ENCODE measurements at regions of chr11 and their contacts with region 1.

Region 1: DNA sequence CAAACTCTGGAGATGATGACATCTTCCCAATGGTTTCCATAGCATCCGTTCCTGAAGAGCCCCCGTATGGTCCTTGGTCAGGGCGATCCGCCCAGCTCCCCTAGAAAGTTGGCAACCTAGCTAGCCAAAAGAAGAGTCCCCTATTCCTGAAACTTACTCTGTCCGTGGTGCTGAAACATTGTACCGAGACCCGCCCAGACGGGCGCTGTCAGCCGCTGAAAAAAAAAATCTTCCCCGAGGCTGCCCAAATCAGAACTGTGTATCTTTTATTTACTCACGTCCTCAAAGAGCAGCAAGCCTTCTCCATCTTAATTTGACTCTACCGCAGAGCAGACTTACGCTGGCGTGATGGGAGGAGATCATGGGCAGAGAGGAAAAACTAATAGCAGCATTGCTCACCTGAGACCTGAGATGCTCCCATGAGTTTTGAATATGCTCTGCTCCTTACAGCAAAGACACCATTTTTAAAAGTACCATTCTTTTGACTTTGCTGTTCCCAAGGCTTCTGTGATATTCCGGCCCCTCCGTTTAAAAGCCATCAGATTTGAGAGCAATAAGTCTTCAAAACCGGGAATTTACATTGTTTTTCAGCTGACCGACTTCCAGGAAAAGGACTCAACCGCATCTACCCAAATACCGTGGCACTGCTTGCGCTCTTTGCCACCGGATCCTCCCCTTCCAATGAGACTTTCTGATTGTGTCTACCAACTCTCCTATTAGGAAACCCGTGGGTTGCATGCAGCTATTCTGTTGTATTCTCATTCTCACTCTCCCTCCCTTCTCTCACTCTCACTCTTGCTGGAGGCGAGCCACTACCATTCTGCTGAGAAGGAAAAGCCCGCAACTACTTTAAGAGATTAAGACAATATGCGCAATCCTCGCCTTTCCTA is at the start of gene SLC17A6:
- DNase-seq: peak in 1 of 2 donors; percentile 77
- H3K4me3 ChIP-seq: no peak within 1 kb of the TSS
- H3K27ac ChIP-seq: no peak within 1 kb of the TSS
- H3K4me1 ChIP-seq: peaks cover 0 to 15% (median 3%) of the 10 kb centered on the region in 4 donors
- H3K27me3 ChIP-seq: peaks cover 11 to 56% (median 54%) of the 10 kb centered on the region in 3 donors
- CTCF ChIP-seq: no peak
- EP300 ChIP-seq: no peak
- POLR2A ChIP-seq: no peak
- total RNA-seq, gene SLC17A6: not detected

Region 2: DNA sequence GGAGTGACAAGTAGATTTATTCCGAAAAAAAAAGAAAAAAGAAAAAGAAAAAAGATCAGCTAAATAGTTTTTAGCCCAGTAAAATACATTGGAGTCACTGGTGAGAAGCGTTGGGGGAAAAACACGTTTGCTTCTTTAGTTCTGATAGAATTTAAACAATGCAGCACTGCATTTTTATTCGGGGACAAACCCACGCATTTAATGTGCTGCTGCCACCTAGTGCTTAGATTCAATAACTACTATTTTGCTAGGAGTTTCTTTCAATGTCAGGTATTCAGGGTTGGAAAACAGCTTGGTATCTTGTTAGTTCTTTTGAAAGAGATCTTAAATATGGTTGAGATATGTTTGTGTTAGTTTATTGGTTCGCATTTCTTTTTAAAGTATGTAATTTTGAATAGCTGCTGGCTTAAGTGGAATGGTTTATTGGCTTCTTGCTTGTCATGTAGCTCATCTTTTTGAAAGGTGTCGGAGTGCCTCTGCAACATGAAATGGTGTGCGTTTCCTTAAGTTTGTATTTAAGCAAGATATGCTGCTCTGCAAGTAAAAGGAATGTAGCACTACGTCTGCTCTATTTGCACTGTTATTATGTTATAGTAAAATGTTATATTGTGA is 449.8 kb after region 1 on chr11:
- intact Hi-C with region 1: loop called (anchors 10 kb)
- DNase-seq: peak in 1 of 2 donors; percentile 75
- H3K4me3 ChIP-seq: no peak overlapping the region
- H3K27ac ChIP-seq: no peak overlapping the region
- H3K4me1 ChIP-seq: no peaks in the 10 kb centered on the region
- H3K27me3 ChIP-seq: no peaks in the 10 kb centered on the region
- CTCF ChIP-seq: peak in 5 of 7 experiments; percentile 16 to 60 (median 47)
- EP300 ChIP-seq: no peak
- POLR2A ChIP-seq: no peak

Measured in stomach (tissue), 19 donors.